Mucosa of descending colon (tissue), 3 donors: ENCODE measurements at regions of chr10 and their contacts with region 1.

Region 1: DNA sequence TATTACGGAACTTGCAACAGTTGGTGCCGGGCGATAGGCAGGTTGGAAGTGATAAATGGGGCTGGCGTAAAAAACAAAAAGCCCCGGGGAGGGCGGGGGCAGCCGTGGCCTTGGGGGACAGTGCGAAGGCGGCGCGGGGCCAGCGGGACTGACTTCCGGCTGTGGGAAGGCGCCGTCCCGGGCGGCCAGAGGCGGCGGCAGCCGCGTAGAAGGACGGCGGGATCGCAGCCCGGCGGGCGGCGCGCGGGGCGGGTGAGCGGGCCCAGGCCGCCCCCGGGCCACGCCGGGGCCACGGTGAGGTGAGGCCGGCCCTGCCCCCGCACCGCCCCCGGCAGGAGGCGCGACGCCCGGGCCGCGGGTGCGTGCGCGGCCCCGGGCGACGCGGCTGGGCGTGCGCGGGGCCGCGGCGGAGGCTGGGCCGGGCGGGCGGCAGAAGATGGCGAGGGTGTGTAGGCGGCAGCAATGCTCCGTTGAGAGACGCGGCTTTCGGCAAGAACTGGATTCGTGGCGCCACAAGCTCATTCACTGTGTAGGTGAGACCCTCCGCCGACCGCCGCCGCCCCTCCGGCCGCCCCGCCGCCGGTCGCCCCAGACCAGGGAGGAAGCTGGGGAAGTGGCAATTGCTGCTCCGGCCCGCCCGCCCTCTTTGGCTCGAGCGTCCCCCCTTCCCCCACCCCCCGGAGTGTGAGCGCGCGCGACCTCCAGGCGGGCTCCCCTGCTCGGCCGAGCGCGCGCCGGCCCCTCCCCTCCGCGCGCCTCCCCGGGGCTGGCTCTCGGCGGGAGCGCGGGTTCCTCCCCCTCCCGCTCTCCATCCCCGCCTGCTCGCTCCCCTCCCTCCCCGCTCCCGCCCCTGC is at the start of gene LCOR:
- DNase-seq: peak; percentile 86 to 91 (median 91)
- ATAC-seq: peak; percentile 85
- H3K4me3 ChIP-seq: peak within 1 kb of the TSS; percentile 83
- H3K4me1 ChIP-seq: peaks cover 37% of the 10 kb centered on the region
- CTCF ChIP-seq: no peak
- total RNA-seq, gene LCOR: 70.4 to 106 (median 93.0) TPM

Region 2: DNA sequence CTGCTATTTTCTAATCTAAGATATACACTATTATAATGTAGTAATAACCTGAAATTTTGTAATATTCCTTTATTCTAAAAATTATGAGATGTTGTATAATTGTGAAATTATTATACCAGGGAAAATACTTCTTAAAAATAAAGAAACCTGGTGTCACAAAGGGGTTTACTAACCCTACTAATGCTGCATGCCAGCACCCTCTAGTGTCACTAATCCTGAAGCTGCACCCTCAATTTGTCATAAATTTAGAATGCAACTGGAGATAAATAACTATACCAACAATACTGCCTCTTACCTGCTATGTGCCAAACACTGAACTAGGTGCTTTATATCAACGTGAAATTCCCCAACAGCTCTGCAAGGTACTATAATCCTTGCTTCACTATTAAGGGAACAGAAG is 276.1 kb before region 1 on chr10:
- intact Hi-C with region 1: no loop called
- DNase-seq: no peak
- ATAC-seq: no peak
- H3K4me3 ChIP-seq: no peak overlapping the region
- H3K4me1 ChIP-seq: peaks cover 6% of the 10 kb centered on the region
- CTCF ChIP-seq: no peak

Region 3: GRCh38 chr10:96765406-96766240 is 66.5 kb before region 1 on chr10:
- intact Hi-C with region 1: loop called in 1 of 2 experiments (anchors 5 kb)
- DNase-seq: peak; percentile 81 to 94 (median 89)
- ATAC-seq: peak; percentile 87
- H3K4me3 ChIP-seq: no peak overlapping the region
- H3K4me1 ChIP-seq: peaks cover 3% of the 10 kb centered on the region
- CTCF ChIP-seq: peak; percentile 74

Region 4: DNA sequence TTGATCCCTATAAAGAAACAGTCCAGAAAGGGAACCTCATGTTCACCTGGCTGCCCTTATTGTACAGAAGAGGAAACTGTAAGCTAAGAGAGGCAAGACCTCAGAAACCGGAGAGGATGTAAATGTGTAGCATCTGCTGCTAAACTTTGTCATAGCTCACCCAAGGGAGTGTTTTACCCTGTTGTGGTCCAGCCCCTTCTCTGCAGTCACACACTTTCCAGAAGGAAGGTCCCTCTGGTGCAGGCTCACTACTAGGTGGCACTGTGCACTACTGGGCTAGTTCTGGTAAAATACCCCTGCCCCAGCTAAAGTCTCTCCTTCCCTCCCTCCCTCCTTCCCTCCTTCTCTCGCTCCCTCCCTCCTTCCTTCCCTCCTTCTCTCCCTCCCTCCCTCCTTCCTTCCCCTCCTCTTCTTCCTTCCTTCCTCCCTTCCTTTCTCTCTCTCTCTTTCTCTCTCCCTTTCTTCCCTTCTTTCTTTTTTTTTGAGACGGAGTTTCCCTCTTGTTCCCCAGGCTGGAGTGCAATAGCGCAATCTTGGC is 42.5 kb before region 1 on chr10:
- intact Hi-C with region 1: no loop called
- DNase-seq: no peak
- ATAC-seq: peak; percentile 38
- H3K4me3 ChIP-seq: no peak overlapping the region
- H3K4me1 ChIP-seq: no peaks in the 10 kb centered on the region
- CTCF ChIP-seq: no peak

Region 5: DNA sequence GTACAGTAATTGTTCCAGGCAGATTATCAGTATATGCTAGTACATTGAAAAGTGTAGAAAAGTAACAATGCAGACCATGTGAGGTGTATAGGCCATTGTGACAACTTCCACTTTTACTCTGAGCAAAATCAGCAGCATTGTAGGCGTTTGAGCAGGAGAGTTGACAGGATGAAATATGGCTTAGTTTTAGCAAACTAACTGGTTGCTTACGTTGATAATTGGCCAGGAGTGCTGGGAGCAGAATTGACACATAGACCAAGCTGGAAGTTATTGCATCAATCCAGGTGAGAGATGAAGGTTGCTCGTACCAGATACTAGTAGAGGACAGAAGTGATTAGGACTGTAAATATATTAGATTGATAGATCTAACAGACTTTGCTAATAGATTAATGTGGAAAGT is 46.0 kb after region 1 on chr10:
- intact Hi-C with region 1: no loop called
- DNase-seq: no peak
- ATAC-seq: peak; percentile 19
- H3K4me3 ChIP-seq: no peak overlapping the region
- H3K4me1 ChIP-seq: no peaks in the 10 kb centered on the region
- CTCF ChIP-seq: no peak